PC-3 (cell line): ENCODE measurements at regions of chr10 and their contacts with region 1.

Region 1: GRCh38 chr10:76036111-76036940 is 604.9 kb downstream of the LRMDA start:
- DNase-seq: peak; percentile 99
- ATAC-seq: peak; percentile 83
- H3K4me3 ChIP-seq: peak overlapping the region; percentile 27
- H3K27ac ChIP-seq: peak overlapping the region; percentile 6
- H3K4me1 ChIP-seq: peaks cover 23% of the 10 kb centered on the region
- H3K27me3 ChIP-seq: peaks cover 34% of the 10 kb centered on the region
- CTCF ChIP-seq: no peak

Region 2: DNA sequence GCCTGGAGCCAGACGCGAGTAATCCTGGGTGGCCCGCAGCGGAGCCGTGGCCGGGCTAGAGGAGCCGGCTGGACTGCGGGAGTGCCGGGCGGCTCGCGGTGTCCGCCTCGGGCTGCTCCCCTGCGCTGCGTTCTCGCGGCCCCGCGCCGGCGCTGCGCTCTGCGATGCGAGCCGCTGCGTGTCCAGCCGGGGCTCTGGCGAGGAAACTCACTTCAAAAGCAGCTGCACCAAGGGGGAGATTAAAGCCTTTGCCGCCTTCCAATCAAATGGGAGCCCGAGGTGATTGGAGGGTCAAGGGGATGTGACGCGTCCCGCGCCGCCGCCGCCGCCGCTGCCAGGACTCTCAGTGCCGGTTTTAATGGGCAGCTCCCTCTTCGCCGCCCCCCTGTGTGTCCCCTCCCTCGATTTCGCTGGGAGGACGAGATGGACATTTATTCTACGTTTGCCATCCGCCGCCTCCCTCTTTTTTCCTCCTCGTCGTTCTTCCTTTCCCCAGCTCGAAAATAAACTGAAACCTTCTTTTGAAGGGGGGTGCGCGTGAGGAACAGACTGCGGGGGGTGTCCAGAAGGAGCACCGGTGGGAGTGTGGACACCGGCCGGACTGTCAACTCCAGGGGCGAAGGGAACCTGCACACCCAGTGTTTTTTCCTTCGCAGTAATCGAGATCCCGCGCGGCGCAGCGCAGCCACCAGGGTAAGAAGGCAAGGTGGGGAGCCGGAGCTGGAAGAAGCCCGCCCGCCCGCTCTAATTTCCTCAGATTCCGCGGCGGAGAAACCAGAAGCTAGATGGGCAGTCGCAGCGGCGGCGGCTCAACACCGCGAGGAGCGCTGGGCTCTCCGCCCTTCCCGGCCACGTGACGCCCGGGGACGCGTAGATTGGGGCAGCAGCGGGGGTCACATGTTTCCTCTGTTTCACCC is 634.5 kb before region 1 on chr10 and contains the start of gene ZNF503:
- CTCF ChIA-PET with region 1: interaction called, 26 read pairs
- POLR2A ChIA-PET with region 1: interaction called, 3 read pairs
- intact Hi-C with region 1: loop called (anchors 1 kb)
- DNase-seq: peak; percentile 100
- ATAC-seq: peak; percentile 39
- H3K4me3 ChIP-seq: peak within 1 kb of the TSS; percentile 79
- H3K27ac ChIP-seq: peak within 1 kb of the TSS; percentile 81
- H3K4me1 ChIP-seq: peaks cover 15% of the 10 kb centered on the region
- H3K27me3 ChIP-seq: peaks cover 96% of the 10 kb centered on the region
- CTCF ChIP-seq: 0 out of 2 replicates have a peak, but pooled peaks have one; percentile 24
- total RNA-seq, gene ZNF503: 42.3 and 72.1 TPM in 2 replicates

Region 3: GRCh38 chr10:75651417-75651816 is 384.9 kb before region 1 on chr10:
- CTCF ChIA-PET with region 1: no interaction called
- POLR2A ChIA-PET with region 1: no interaction called
- intact Hi-C with region 1: loop called (anchors 1 kb)
- DNase-seq: peak; percentile 64
- ATAC-seq: no peak
- H3K4me3 ChIP-seq: no peak overlapping the region
- H3K27ac ChIP-seq: no peak overlapping the region
- H3K4me1 ChIP-seq: peaks cover 48% of the 10 kb centered on the region
- H3K27me3 ChIP-seq: peaks cover 9% of the 10 kb centered on the region; the same call in 1 of the 2 replicates
- CTCF ChIP-seq: peak; percentile 71

Region 4: GRCh38 chr10:75910032-75910431 is 126.3 kb before region 1 on chr10:
- CTCF ChIA-PET with region 1: interaction called, 4 read pairs
- POLR2A ChIA-PET with region 1: no interaction called
- intact Hi-C with region 1: loop called (anchors 1 kb)
- DNase-seq: peak; percentile 90
- ATAC-seq: peak; percentile 36; the same call in 1 of the 2 replicates
- H3K4me3 ChIP-seq: no peak overlapping the region
- H3K27ac ChIP-seq: no peak overlapping the region
- H3K4me1 ChIP-seq: peaks cover 7% of the 10 kb centered on the region
- H3K27me3 ChIP-seq: peaks cover 74% of the 10 kb centered on the region
- CTCF ChIP-seq: no peak

Region 5: DNA sequence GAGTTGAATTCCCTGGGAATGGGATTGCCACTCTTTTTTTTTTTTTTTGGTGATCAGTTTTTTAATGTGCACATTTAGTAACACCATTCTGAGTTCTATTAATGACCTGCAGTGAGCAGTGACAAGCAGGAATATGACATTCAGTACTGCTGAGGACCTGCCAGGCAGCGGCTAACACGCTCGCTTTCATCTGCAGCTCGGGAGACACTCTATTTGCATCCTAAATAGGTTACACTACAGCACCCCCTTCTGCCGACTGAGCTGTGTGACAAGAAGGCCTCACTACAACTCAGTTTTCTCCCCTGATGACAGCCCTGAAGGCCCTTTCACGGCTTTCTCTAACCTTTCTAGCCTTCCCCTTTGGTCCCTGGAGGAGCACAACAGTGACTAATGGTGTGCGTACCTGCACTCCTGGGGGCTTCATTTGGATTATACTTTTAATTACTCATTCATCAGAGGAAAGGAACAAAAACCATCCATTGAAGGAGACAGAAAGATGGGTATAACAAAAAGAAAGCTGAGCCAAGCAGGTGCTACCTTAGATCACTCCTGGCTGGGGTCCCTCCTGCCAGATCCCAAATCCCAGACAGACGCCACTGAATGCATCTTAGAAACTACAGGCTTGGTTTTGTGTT is 267.5 kb after region 1 on chr10:
- CTCF ChIA-PET with region 1: interaction called, 18 read pairs
- POLR2A ChIA-PET with region 1: no interaction called
- intact Hi-C with region 1: loop called (anchors 1 kb)
- DNase-seq: peak; percentile 98
- ATAC-seq: peak; percentile 98
- H3K4me3 ChIP-seq: no peak overlapping the region
- H3K27ac ChIP-seq: no peak overlapping the region
- H3K4me1 ChIP-seq: peaks cover 4% of the 10 kb centered on the region; the same call in 1 of the 2 replicates
- H3K27me3 ChIP-seq: peaks cover 13% of the 10 kb centered on the region; the same call in 1 of the 2 replicates
- CTCF ChIP-seq: peak; percentile 100

Region 6: DNA sequence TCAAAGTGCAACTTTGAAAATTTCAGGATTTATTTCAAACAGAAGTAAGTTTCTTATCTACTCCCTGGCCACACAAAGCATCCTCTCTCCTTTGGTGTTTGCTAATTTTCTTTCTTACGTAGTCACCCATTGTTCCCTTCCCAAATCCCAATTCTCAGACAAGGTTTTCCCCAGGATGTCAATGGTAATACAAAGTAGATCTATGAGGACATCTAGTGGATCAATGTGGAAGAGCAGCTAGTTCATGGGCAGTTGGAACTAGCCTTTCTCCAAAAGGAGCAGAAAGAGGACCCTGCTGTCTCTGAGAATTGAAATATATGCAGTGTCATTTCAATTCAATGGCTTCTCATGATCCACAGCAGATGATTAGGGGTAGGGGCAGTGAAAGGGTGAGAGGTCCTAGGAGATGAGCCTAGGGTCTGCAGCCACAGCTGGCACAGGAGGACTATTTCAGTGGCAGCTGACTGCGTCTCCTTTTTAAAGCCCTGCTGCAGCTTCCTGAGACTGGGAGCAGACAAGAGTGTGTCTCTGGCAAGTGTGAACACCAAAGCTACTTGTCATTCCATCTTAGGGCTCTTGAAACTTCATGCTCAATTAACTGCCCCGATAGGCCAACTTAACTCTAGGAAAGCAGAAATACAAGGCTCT is 968.7 kb after region 1 on chr10:
- CTCF ChIA-PET with region 1: no interaction called
- POLR2A ChIA-PET with region 1: no interaction called
- intact Hi-C with region 1: loop called (anchors 5 kb)
- DNase-seq: peak; percentile 99
- ATAC-seq: peak; percentile 89
- H3K4me3 ChIP-seq: no peak overlapping the region
- H3K27ac ChIP-seq: no peak overlapping the region
- H3K4me1 ChIP-seq: peaks cover 4% of the 10 kb centered on the region; the same call in 1 of the 2 replicates
- H3K27me3 ChIP-seq: no peaks in the 10 kb centered on the region
- CTCF ChIP-seq: peak; percentile 100